ENCODE measurements at regions of chr7 and their contacts with region 1.

Region 1: GRCh38 chr7:36315309-36316133 is 74.1 kb upstream of the ANLN start:
- DNase-seq: no peak
- H3K4me3 ChIP-seq: no peak overlapping the region
- H3K4me3 Mint-ChIP-seq: no peak overlapping the region
- H3K27ac ChIP-seq: no peak overlapping the region
- H3K27ac Mint-ChIP-seq: no peak overlapping the region
- H3K4me1 ChIP-seq: peaks cover 3% of the 10 kb centered on the region
- H3K4me1 Mint-ChIP-seq: peaks cover 2 to 6% (median 5%) of the 10 kb centered on the region in 4 donors
- H3K27me3 ChIP-seq: no peaks in the 10 kb centered on the region
- H3K27me3 Mint-ChIP-seq: no peaks in the 10 kb centered on the region

Region 2: GRCh38 chr7:35985126-35985754 is 330.3 kb before region 1 on chr7:
- CTCF ChIA-PET with region 1: interaction called, 45 read pairs
- POLR2A ChIA-PET with region 1: no interaction called
- intact Hi-C with region 1: loop called (anchors 1 kb)
- DNase-seq: peak; percentile 74 to 81 (median 76)
- H3K4me3 ChIP-seq: no peak overlapping the region
- H3K4me3 Mint-ChIP-seq: no peak overlapping the region
- H3K27ac ChIP-seq: no peak overlapping the region
- H3K27ac Mint-ChIP-seq: peak overlapping the region in 2 of 7 donors; percentile 52 to 80
- H3K4me1 ChIP-seq: no peaks in the 10 kb centered on the region
- H3K4me1 Mint-ChIP-seq: peaks cover 0 to 5% (median 2%) of the 10 kb centered on the region in 4 donors
- H3K27me3 ChIP-seq: no peaks in the 10 kb centered on the region
- H3K27me3 Mint-ChIP-seq: peaks cover 2 to 3% of the 10 kb centered on the region in 2 donors

Region 3: DNA sequence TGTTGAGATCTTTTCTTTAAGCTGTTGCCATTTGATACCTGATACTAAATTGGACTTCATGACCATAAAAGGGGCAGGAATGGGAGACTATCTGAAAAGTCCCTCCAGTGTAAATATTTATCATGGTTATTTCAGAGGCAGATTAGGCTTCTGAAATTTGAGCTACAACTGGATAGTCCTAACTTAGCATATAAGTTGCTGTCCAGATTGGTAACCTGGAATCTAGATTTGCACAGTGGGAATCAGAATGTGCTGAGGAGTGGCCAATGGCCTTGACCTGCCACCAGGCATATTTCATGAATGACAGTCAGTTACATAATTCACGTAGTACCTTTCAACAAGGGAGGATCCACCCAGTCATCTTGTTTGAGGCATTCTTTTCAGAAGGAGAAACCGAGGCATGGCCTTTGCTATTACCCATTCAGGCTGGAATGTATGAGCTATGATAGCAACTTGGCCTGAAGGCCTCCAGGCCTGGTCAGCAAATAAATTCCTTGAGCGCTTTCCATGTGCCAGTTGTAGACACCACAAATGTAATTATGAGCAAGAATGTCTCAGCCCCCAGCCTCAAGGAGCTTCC is 82.5 kb before region 1 on chr7:
- CTCF ChIA-PET with region 1: no interaction called
- POLR2A ChIA-PET with region 1: no interaction called
- intact Hi-C with region 1: no loop called
- DNase-seq: no peak
- H3K4me3 ChIP-seq: no peak overlapping the region
- H3K4me3 Mint-ChIP-seq: no peak overlapping the region
- H3K27ac ChIP-seq: no peak overlapping the region
- H3K27ac Mint-ChIP-seq: peak overlapping the region in 3 of 7 donors; percentile 31 to 66 (median 58)
- H3K4me1 ChIP-seq: no peaks in the 10 kb centered on the region
- H3K4me1 Mint-ChIP-seq: peaks cover 4 to 8% (median 4%) of the 10 kb centered on the region in 4 donors
- H3K27me3 ChIP-seq: no peaks in the 10 kb centered on the region
- H3K27me3 Mint-ChIP-seq: no peaks in the 10 kb centered on the region

Region 4: DNA sequence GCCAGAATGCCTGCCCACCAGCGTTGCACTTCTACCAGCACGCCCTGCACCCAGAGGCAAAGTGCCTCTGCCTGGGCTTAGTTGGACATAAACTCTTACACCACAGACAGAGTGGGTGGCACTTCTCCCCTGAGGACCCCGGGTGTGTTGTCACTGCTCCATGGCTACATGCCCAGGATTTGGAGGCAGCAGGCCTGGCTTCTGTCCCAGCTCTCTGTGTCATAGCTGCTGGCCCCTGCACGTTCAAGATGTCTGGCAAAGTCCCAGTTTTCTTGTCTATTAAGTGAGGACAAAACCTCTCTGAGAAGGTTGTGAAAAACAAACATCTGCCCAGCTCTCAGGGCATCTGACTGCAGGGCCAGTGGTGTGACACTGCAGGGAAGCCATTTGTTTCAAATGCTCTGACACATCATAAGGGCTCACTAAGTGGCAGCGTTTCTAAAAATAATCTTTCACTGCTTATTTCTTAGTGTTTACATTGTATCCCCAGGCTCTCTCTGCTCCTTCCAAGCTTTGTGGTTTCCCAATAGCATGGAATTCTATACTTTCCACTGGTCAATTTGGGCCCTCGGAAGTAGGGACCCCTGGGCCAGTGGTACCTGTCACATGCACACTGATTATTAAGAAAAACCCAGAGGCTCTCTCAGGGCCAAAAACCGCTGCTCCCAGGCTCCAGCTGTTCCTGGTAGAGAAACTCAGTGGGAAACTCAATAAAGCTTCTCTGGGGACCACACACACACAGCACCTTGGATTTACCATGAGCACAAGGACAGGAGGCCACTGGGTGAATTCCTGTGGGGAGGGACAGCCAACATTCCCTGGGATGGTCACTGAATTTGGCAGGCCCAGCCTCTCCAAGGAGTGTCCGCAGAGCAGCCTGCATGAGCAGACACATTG is 12.1 kb before region 1 on chr7:
- CTCF ChIA-PET with region 1: interaction called, 56 read pairs
- POLR2A ChIA-PET with region 1: interaction called, 3 read pairs
- intact Hi-C with region 1: no loop called
- DNase-seq: no peak
- H3K4me3 ChIP-seq: no peak overlapping the region
- H3K4me3 Mint-ChIP-seq: no peak overlapping the region
- H3K27ac ChIP-seq: no peak overlapping the region
- H3K27ac Mint-ChIP-seq: peak overlapping the region in 3 of 7 donors; percentile 29 to 84 (median 49)
- H3K4me1 ChIP-seq: no peaks in the 10 kb centered on the region
- H3K4me1 Mint-ChIP-seq: no peaks in the 10 kb centered on the region
- H3K27me3 ChIP-seq: no peaks in the 10 kb centered on the region
- H3K27me3 Mint-ChIP-seq: no peaks in the 10 kb centered on the region

Region 5: GRCh38 chr7:36573066-36573465 is 257.5 kb after region 1 on chr7:
- CTCF ChIA-PET with region 1: no interaction called
- POLR2A ChIA-PET with region 1: no interaction called
- intact Hi-C with region 1: no loop called
- DNase-seq: no peak
- H3K4me3 ChIP-seq: no peak overlapping the region
- H3K4me3 Mint-ChIP-seq: no peak overlapping the region
- H3K27ac ChIP-seq: no peak overlapping the region
- H3K27ac Mint-ChIP-seq: no peak overlapping the region
- H3K4me1 ChIP-seq: no peaks in the 10 kb centered on the region
- H3K4me1 Mint-ChIP-seq: peaks cover 0 to 4% (median 0%) of the 10 kb centered on the region in 4 donors
- H3K27me3 ChIP-seq: no peaks in the 10 kb centered on the region
- H3K27me3 Mint-ChIP-seq: peaks cover 0 to 3% of the 10 kb centered on the region in 2 donors

Measured in CD4-positive, alpha-beta memory T cell (primary cell).